B cell (primary cell): ENCODE measurements at regions of chr6 and their contacts with region 1.

Region 1: DNA sequence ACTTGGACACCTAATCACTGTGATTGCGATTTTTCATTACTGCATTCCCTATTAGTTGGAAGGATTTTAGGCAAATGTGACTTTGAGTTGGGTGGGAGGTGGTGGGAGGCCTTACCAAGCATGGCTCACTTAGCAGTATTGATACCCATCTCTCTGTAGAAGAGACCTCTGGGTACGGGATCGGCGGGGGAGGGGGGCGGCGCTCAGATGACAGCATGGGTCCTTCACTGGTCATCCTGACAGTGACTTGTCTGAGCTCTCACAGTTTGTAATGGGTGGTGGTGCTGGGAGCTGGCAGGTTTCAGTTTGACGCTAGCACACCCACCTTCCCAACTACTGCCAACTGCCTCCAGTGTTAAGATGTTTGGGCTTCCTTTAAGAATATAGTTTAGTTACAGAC is 231.4 kb downstream of the ARID1B start:
- DNase-seq: no peak
- ATAC-seq: no peak
- H3K4me3 ChIP-seq: no peak overlapping the region
- H3K4me3 Mint-ChIP-seq: no peak overlapping the region
- H3K27ac ChIP-seq: no peak overlapping the region
- H3K27ac Mint-ChIP-seq: no peak overlapping the region
- H3K4me1 ChIP-seq: peaks cover 9 to 10% of the 10 kb centered on the region in 2 donors
- H3K4me1 Mint-ChIP-seq: peaks cover 63% of the 10 kb centered on the region
- H3K27me3 ChIP-seq: no peaks in the 10 kb centered on the region
- H3K27me3 Mint-ChIP-seq: no peaks in the 10 kb centered on the region
- CTCF ChIP-seq: no peak

Region 2: DNA sequence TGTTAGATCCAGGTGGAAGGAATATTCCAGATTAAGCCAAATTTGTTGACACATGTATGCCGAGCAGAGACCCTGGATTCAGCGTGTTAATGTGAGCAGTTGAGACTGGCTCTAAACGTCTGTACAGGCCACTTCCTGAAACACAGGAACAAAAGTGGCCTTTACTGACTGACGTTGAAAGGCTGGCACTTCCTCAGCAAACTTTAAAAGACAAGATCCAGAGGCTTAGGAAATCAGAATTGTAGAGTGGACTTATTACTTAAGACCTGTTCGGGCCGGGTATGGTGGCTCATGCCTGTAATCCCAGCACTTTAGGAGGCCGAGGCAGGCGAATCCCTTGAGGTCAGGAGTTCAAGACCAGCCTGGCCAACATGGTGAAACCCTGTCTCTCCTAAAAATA is 357.1 kb before region 1 on chr6:
- CTCF ChIA-PET with region 1: no interaction called
- POLR2A ChIA-PET with region 1: no interaction called
- intact Hi-C with region 1: no loop called
- DNase-seq: no peak
- ATAC-seq: no peak
- H3K4me3 ChIP-seq: no peak overlapping the region
- H3K4me3 Mint-ChIP-seq: no peak overlapping the region
- H3K27ac ChIP-seq: no peak overlapping the region
- H3K27ac Mint-ChIP-seq: no peak overlapping the region
- H3K4me1 ChIP-seq: peaks cover 14 to 18% of the 10 kb centered on the region in 2 donors
- H3K4me1 Mint-ChIP-seq: peaks cover 20% of the 10 kb centered on the region
- H3K27me3 ChIP-seq: no peaks in the 10 kb centered on the region
- H3K27me3 Mint-ChIP-seq: peaks cover 6% of the 10 kb centered on the region
- CTCF ChIP-seq: no peak

Region 3: DNA sequence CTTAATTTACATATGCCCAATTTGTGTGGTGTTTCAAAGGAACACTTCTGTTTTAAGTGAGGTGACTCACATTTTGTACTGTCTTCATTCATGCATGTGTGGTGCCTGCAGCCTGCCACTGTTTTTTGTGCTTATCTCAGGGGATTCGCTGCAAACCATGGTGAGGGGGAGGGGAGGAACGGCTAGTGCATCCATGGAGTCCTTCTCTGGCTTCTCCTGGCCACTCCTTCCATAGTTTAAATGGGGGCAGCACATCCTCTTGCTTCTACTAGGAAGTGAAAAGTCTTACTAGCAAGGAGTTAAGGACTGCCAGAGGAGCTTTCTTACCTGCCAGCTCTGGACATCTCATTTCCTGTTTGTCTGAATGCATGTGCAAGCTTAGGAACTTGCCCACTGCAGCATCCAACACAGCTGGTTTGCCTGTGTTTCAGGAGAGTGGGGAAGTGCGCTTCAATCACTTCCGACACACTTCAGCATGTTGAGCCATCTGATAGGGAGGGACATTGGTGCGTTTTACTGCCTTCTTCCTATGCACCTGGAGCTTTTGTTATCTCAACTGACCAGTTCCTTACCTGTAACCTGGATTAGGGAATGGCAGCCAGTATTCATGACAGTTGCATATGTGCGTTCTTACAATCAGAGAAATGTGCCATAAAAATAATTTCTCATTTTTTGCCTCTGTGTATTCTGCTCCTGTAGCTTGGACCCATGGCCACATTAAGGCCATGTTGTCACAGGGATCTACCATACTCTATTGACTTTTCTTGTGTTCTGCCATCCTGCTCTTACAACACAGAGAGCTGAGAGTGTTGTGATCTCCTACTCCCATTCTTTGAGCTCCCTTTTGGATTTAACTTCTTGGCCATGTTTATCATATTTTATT is 20.1 kb before region 1 on chr6:
- CTCF ChIA-PET with region 1: interaction called, 3 read pairs
- POLR2A ChIA-PET with region 1: no interaction called
- intact Hi-C with region 1: loop called (anchors 2 kb)
- DNase-seq: peak; percentile 69
- ATAC-seq: peak; percentile 84
- H3K4me3 ChIP-seq: peak overlapping the region in 3 of 5 experiments; percentile 21 to 40 (median 27)
- H3K4me3 Mint-ChIP-seq: peak overlapping the region; percentile 72
- H3K27ac ChIP-seq: peak overlapping the region; percentile 53
- H3K27ac Mint-ChIP-seq: peak overlapping the region; percentile 69
- H3K4me1 ChIP-seq: peaks cover 42 to 59% of the 10 kb centered on the region in 2 donors
- H3K4me1 Mint-ChIP-seq: peaks cover 73% of the 10 kb centered on the region
- H3K27me3 ChIP-seq: no peaks in the 10 kb centered on the region
- H3K27me3 Mint-ChIP-seq: no peaks in the 10 kb centered on the region
- CTCF ChIP-seq: no peak

Region 4: GRCh38 chr6:157304899-157305663 is 296.5 kb after region 1 on chr6:
- CTCF ChIA-PET with region 1: no interaction called
- POLR2A ChIA-PET with region 1: no interaction called
- intact Hi-C with region 1: no loop called
- DNase-seq: no peak
- ATAC-seq: peak; percentile 24
- H3K4me3 ChIP-seq: no peak overlapping the region
- H3K4me3 Mint-ChIP-seq: no peak overlapping the region
- H3K27ac ChIP-seq: peak overlapping the region in 1 of 2 donors; percentile 25
- H3K27ac Mint-ChIP-seq: no peak overlapping the region
- H3K4me1 ChIP-seq: peaks cover 15 to 18% of the 10 kb centered on the region in 2 donors
- H3K4me1 Mint-ChIP-seq: peaks cover 4% of the 10 kb centered on the region
- H3K27me3 ChIP-seq: no peaks in the 10 kb centered on the region
- H3K27me3 Mint-ChIP-seq: no peaks in the 10 kb centered on the region
- CTCF ChIP-seq: no peak